Activated naive CD4-positive, alpha-beta T cell treated with anti-CD3 and anti-CD28 coated beads, Interleukin-2, amount 10 ng/mL, durations not matched to agents 7 days and 5 days (primary cell): ENCODE measurements at regions of chr17 and their contacts with region 1.

Region 1: DNA sequence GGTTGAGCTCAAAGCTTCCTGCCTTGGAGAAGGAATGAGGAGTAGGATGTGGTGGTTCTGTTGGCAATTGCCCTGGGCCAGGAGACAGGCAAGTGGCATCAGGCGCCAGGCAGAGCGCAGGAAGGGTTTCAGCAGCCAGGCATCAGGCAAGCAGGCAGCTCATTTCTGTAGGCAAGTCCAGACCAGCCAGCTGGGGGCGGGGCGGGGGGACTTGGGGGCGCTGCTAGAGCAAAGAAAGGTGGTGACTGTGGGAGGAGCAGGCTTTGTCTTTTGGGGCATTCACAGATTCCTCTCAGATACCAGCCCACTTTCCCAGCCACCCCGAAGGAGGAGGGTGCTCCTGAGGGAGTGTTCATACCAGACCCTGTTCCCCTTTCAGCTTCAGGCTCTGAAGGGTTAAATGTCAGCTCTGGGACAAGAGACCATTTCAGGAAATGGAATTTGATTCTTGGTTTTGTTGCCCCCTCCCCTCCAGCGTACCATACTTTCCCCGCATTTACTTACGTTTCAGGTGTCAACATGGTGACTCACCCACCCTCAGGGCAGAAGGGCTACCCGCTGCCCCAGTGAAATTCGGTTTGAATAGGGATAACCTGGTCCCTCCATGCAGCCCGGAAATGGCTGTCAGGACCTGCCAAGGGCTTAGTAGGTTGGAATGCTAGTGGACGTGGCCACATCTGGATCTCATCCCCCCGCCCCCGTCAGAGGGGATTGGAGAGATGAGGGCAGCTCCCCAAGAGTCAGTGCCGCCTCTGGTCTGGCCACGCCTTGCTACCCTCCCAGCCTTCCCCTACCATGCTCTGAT is 13.2 kb downstream of the NGFR start:
- DNase-seq: no peak
- H3K4me3 Mint-ChIP-seq: no peak overlapping the region
- H3K27ac Mint-ChIP-seq: no peak overlapping the region
- H3K4me1 Mint-ChIP-seq: no peaks in the 10 kb centered on the region
- H3K27me3 Mint-ChIP-seq: peaks cover 74% of the 10 kb centered on the region

Region 2: DNA sequence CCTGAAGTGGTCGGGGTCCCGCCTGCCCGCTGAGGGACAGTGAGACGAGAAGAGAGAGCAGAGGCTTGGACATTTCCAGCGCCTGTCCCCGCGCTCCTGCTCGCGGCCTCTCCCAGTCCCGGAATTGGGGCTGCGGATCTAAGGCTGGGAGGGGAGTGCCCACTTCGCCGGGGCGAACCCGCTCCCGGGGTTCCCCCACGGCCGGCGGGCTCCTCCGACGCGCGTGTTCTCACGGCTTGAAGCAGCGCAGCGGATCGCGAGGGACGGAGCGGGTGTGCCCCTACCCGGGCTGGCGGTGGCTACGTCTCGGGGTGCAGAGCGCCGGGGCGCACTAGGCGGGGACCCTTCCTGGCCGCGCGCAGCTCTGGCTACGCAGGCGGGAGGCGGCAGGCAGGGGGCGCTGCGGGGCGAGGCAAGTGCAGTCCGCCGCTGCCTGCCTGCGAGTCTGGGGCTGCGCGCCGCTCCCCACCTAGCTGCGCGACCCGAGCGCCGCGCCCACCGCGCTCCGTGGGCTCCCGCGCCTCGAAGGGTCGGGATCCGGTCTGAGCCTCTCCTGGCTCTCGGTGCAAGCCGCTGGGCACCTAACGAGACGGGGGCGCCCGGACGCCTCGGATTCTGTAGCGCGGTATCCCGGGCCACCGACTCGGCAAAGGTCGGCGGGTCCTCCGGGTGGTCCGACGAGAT is 11.9 kb before region 1 on chr17:
- CTCF ChIA-PET with region 1: interaction called, 24 read pairs
- DNase-seq: peak; percentile 88
- H3K4me3 Mint-ChIP-seq: peak overlapping the region; percentile 60
- H3K27ac Mint-ChIP-seq: no peak overlapping the region
- H3K4me1 Mint-ChIP-seq: peaks cover 31% of the 10 kb centered on the region
- H3K27me3 Mint-ChIP-seq: peaks cover 88% of the 10 kb centered on the region

Region 3: GRCh38 chr17:50051082-50051576 is 542.9 kb after region 1 on chr17:
- CTCF ChIA-PET with region 1: no interaction called
- DNase-seq: peak; percentile 65
- H3K4me3 Mint-ChIP-seq: no peak overlapping the region
- H3K27ac Mint-ChIP-seq: no peak overlapping the region
- H3K4me1 Mint-ChIP-seq: peaks cover 24% of the 10 kb centered on the region
- H3K27me3 Mint-ChIP-seq: peaks cover 6% of the 10 kb centered on the region